H1 (cell line): ENCODE measurements at regions of chr9 and their contacts with region 1.

Region 1: GRCh38 chr9:98536542-98537173 is 172.1 kb downstream of the GABBR2 start:
- DNase-seq: peak; percentile 15 to 79
- H3K4me3 ChIP-seq: no peak overlapping the region
- H3K27ac ChIP-seq: no peak overlapping the region
- H3K4me1 ChIP-seq: no peaks in the 10 kb centered on the region; a peak in 1 of 7 replicates
- H3K27me3 ChIP-seq: no peaks in the 10 kb centered on the region
- CTCF ChIP-seq: peak; percentile 72 to 81 (median 74)
- EP300 ChIP-seq: no peak
- POLR2A ChIP-seq: no peak
- RAD21 ChIP-seq: peak; percentile 65 to 76

Region 2: DNA sequence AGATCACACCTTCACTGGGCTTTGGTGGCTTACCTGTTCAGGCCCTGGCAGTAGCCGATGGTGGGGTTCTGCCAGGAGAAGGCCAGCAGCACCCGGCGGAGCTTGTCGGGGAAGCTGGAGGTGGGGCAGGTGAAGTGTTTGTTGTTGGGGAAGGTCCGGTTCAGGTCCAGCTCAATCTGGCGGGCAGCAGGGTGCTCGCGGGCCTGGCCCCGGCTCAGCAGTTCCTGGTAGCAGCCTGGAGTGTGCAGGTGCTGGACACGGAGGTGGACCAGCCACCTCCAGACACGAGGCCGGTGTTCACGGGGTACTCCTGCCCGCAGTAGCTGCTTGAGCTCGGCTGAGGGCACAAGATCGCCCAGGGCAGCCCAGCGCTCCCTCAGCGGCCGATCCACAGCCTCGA is 328.0 kb before region 1 on chr9:
- CTCF ChIA-PET with region 1: no interaction called
- POLR2A ChIA-PET with region 1: no interaction called
- DNase-seq: no peak
- H3K4me3 ChIP-seq: no peak overlapping the region
- H3K27ac ChIP-seq: no peak overlapping the region
- H3K4me1 ChIP-seq: no peaks in the 10 kb centered on the region
- H3K27me3 ChIP-seq: no peaks in the 10 kb centered on the region
- CTCF ChIP-seq: no peak
- EP300 ChIP-seq: no peak
- POLR2A ChIP-seq: no peak
- RAD21 ChIP-seq: no peak

Region 3: GRCh38 chr9:98334796-98335195 is 201.9 kb before region 1 on chr9:
- CTCF ChIA-PET with region 1: no interaction called
- POLR2A ChIA-PET with region 1: no interaction called
- DNase-seq: no peak
- H3K4me3 ChIP-seq: no peak overlapping the region
- H3K27ac ChIP-seq: no peak overlapping the region
- H3K4me1 ChIP-seq: no peaks in the 10 kb centered on the region
- H3K27me3 ChIP-seq: no peaks in the 10 kb centered on the region; a peak in 1 of 7 replicates
- CTCF ChIP-seq: no peak
- EP300 ChIP-seq: no peak
- POLR2A ChIP-seq: no peak
- RAD21 ChIP-seq: no peak

Region 4: GRCh38 chr9:98523231-98523896 is 13.3 kb before region 1 on chr9:
- CTCF ChIA-PET with region 1: interaction called, 18 read pairs
- POLR2A ChIA-PET with region 1: no interaction called
- DNase-seq: no peak
- H3K4me3 ChIP-seq: no peak overlapping the region
- H3K27ac ChIP-seq: no peak overlapping the region
- H3K4me1 ChIP-seq: no peaks in the 10 kb centered on the region
- H3K27me3 ChIP-seq: no peaks in the 10 kb centered on the region
- CTCF ChIP-seq: peak; percentile 64 to 69 (median 67)
- EP300 ChIP-seq: no peak
- POLR2A ChIP-seq: no peak
- RAD21 ChIP-seq: peak; percentile 72 to 81

Region 5: GRCh38 chr9:98707166-98708102 is 170.8 kb after region 1 on chr9:
- CTCF ChIA-PET with region 1: interaction called, 10 read pairs
- POLR2A ChIA-PET with region 1: no interaction called
- DNase-seq: peak; percentile 73 to 86
- H3K4me3 ChIP-seq: peak overlapping the region in 3 of 4 experiments; percentile 29 to 55 (median 52); a peak in 6 of 8 replicates
- H3K27ac ChIP-seq: no peak overlapping the region
- H3K4me1 ChIP-seq: peaks cover 0 to 11% (median 5%) of the 10 kb centered on the region in 4 experiments; a peak in 5 of 7 replicates
- H3K27me3 ChIP-seq: peaks cover 44 to 70% (median 61%) of the 10 kb centered on the region in 4 experiments
- CTCF ChIP-seq: peak; percentile 86 to 89 (median 87)
- EP300 ChIP-seq: no peak
- POLR2A ChIP-seq: no peak
- RAD21 ChIP-seq: peak; percentile 85 to 91